Left ventricle myocardium inferior (tissue), 1 donor: ENCODE measurements at regions of chr16 and their contacts with region 1.

Region 1: GRCh38 chr16:4529085-4530060 is 9.2 kb downstream of the CDIP1 start:
- DNase-seq: no peak
- H3K4me3 ChIP-seq: no peak overlapping the region
- H3K27ac ChIP-seq: peak overlapping the region; percentile 27
- H3K4me1 ChIP-seq: peaks cover 76% of the 10 kb centered on the region
- H3K27me3 ChIP-seq: no peaks in the 10 kb centered on the region
- CTCF ChIP-seq: no peak

Region 2: DNA sequence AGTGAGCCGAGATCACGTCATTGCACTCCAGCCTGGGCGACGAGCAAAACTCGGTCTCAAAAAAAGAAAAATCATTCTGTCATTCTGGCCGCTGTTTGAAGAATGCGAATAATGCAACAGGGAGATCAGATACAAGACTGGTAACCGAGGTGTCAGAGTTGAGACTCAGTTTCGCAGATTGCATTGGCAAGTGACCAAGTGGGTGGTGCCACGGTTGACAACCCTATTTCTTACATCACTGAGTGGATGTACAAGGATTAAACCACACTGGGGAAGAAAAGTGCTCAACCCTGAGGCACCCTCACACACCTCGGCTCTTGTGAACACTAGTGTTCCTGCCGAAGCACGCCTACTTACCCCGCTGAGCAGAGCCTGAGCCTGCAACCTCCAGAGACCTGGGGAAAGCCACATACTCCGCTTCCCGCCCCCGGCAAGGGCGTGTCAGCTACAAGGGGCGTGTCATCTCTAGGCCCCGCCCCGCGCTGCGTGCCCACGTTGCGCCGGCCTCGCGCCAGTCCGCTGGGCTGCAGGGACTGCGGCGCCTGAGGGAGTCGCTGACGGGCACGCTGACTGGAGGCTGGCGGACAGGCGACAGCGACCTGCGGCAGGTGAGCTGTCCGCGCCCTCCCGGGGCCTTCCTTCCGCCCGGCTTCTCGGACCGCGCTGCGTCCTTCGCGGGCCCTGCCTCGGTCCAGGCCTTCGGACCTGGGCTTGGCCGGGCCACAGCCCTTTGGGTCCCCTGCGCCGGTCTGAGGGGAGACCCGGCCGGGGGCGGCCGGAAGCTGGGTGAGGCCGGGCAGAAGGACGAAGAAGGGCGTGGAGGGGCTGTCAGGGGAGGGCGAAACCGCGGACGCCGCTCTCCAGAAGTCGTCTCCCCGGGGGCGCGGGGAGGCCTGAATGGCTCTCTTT is 53.2 kb before region 1 on chr16 and contains the start of gene HMOX2:
- intact Hi-C with region 1: no loop called
- DNase-seq: peak; percentile 93
- H3K4me3 ChIP-seq: peak within 1 kb of the TSS; percentile 100
- H3K27ac ChIP-seq: peak within 1 kb of the TSS; percentile 98
- H3K4me1 ChIP-seq: peaks cover 58% of the 10 kb centered on the region
- H3K27me3 ChIP-seq: no peaks in the 10 kb centered on the region
- CTCF ChIP-seq: peak; percentile 52
- total RNA-seq, gene HMOX2: 115 TPM

Region 3: DNA sequence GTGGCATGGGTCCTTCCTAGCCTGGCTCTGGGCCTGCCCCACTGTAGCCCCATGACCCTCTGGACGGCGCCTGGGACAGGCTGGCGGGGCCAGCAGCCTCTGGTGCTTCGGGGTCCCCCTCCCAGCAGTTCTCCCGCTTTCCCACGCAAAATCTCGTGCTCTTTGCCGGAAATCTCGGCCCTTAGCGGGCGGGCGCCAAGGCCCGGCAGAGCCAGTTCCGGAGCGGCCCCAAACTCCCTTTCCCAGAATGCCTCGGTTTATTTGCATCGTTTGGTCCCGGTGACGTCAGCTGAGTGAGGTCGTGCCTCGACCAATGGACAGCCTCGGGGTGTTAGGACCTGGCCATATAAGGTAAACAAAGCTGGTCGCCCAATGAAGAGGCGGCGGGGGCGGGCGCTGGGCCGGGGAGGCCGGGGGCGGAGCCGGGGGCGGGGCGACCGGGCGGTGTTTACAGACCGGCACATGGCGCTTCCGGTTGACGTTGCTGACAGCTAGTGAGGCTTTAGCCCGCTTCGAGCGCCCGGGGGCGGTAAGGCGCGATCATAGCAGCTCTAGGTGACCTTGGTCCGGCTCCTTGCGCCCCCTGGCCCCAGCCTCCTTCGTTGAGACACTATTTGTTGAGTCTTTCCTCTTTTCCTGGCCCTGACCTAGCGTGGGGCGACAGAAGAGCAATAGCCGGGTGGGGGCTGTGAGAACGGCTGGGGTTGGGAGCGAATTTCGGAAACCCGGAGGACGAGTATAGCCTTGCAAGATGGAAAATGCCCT is 86.9 kb after region 1 on chr16:
- intact Hi-C with region 1: loop called (anchors 10 kb)
- DNase-seq: peak; percentile 99
- H3K4me3 ChIP-seq: peak overlapping the region; percentile 91
- H3K27ac ChIP-seq: peak overlapping the region; percentile 96
- H3K4me1 ChIP-seq: peaks cover 71% of the 10 kb centered on the region
- H3K27me3 ChIP-seq: no peaks in the 10 kb centered on the region
- CTCF ChIP-seq: peak; percentile 51